ENCODE measurements at regions of chr1 and their contacts with region 1.

Region 1: DNA sequence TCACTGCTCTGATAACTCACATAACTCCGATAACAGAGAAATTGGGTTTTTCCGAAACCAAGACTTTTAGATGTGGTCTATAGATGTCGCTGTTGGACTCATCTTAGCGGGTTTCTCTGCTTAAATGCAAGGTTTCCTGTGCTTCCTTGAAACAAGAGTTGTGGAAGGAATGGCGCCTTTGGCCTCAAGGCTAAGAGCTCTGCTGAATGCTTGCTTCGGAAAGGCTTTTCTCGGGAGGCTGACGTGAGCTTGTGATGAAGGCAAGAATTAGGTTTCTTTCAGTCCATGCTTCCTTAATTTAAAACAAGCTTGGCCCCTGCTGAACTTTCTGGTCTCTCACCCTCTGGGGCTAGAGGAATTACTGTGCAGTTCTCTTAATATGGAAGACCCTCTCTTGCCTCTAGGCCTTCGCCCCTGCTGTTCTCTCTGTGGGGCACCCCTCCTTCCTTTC is 113.5 kb downstream of the MAP3K21 start:
- DNase-seq: peak; percentile 8
- H3K4me3 Mint-ChIP-seq: no peak overlapping the region
- H3K27ac Mint-ChIP-seq: no peak overlapping the region
- H3K4me1 Mint-ChIP-seq: no peaks in the 10 kb centered on the region
- H3K27me3 Mint-ChIP-seq: peaks cover 17% of the 10 kb centered on the region

Region 2: DNA sequence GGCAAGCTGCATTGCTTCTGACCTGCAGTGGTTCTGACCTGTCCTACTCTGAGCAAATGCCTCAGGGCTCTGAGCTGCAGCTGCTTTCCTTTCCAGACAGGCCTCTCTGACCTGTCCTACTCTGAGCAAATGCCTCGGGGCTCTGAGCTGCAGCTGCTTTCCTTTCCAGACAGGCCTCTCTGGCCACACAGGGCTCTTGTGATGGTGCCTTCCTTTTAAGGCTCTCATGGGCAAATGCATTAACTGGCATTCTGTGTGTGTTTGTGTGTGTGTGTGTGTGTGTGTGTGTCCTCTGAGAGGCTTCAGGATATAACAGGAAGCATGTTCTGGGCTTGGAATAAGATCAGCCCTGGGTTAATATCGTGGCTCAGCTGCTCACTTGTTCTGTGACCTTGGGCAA is 359.2 kb before region 1 on chr1:
- CTCF ChIA-PET with region 1: no interaction called
- intact Hi-C with region 1: no loop called
- DNase-seq: no peak
- H3K4me3 Mint-ChIP-seq: no peak overlapping the region
- H3K27ac Mint-ChIP-seq: no peak overlapping the region
- H3K4me1 Mint-ChIP-seq: no peaks in the 10 kb centered on the region
- H3K27me3 Mint-ChIP-seq: no peaks in the 10 kb centered on the region

Region 3: GRCh38 chr1:233394860-233395717 is 45.9 kb before region 1 on chr1:
- CTCF ChIA-PET with region 1: no interaction called
- intact Hi-C with region 1: loop called (anchors 5 kb)
- DNase-seq: peak; percentile 35
- H3K4me3 Mint-ChIP-seq: no peak overlapping the region
- H3K27ac Mint-ChIP-seq: no peak overlapping the region
- H3K4me1 Mint-ChIP-seq: no peaks in the 10 kb centered on the region
- H3K27me3 Mint-ChIP-seq: peaks cover 36% of the 10 kb centered on the region